T-cell (primary cell): ENCODE measurements at regions of chr1 and their contacts with region 1.

Region 1: GRCh38 chr1:61282387-61282786 is 200.0 kb downstream of the NFIA start:
- DNase-seq: no peak
- ATAC-seq: no peak
- H3K4me3 ChIP-seq: no peak overlapping the region
- H3K4me3 Mint-ChIP-seq: no peak overlapping the region
- H3K27ac ChIP-seq: no peak overlapping the region
- H3K27ac Mint-ChIP-seq: no peak overlapping the region
- H3K4me1 ChIP-seq: no peaks in the 10 kb centered on the region
- H3K4me1 Mint-ChIP-seq: peaks cover 0 to 3% (median 0%) of the 10 kb centered on the region in 3 donors
- H3K27me3 ChIP-seq: no peaks in the 10 kb centered on the region
- H3K27me3 Mint-ChIP-seq: no peaks in the 10 kb centered on the region

Region 2: DNA sequence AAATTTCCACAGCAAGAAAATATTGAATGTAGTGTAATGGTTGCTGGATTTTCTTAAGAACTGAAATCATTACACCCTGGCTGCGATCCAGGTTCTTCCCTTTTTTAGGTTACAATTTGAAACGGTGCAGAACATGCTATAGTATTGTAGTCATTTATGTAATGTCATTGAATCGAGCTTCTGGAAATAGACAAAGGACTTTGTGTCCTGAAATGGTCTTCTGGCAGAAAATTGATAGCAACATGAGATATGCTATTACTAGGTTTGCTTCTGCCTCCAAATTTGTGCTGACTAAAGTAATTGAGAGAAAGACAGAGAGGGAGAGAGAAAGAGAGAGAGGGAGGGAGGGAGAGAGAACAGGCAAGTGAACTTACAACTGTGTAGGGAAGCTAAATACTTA is 346.2 kb before region 1 on chr1:
- CTCF ChIA-PET with region 1: no interaction called
- POLR2A ChIA-PET with region 1: no interaction called
- DNase-seq: no peak
- ATAC-seq: no peak
- H3K4me3 ChIP-seq: no peak overlapping the region
- H3K4me3 Mint-ChIP-seq: no peak overlapping the region
- H3K27ac ChIP-seq: no peak overlapping the region
- H3K27ac Mint-ChIP-seq: no peak overlapping the region
- H3K4me1 ChIP-seq: no peaks in the 10 kb centered on the region
- H3K4me1 Mint-ChIP-seq: no peaks in the 10 kb centered on the region
- H3K27me3 ChIP-seq: no peaks in the 10 kb centered on the region
- H3K27me3 Mint-ChIP-seq: peaks cover 12 to 13% of the 10 kb centered on the region in 2 donors

Region 3: GRCh38 chr1:61266738-61267137 is 15.6 kb before region 1 on chr1:
- CTCF ChIA-PET with region 1: interaction called in 1 of 2 experiments, 18 read pairs
- POLR2A ChIA-PET with region 1: interaction called in 1 of 2 experiments, 5 read pairs
- DNase-seq: no peak
- ATAC-seq: no peak
- H3K4me3 ChIP-seq: no peak overlapping the region
- H3K4me3 Mint-ChIP-seq: no peak overlapping the region
- H3K27ac ChIP-seq: no peak overlapping the region
- H3K27ac Mint-ChIP-seq: no peak overlapping the region
- H3K4me1 ChIP-seq: no peaks in the 10 kb centered on the region
- H3K4me1 Mint-ChIP-seq: peaks cover 10 to 12% (median 12%) of the 10 kb centered on the region in 3 donors
- H3K27me3 ChIP-seq: no peaks in the 10 kb centered on the region
- H3K27me3 Mint-ChIP-seq: peaks cover 0 to 3% of the 10 kb centered on the region in 2 donors

Region 4: GRCh38 chr1:61318319-61319125 is 36.1 kb after region 1 on chr1:
- CTCF ChIA-PET with region 1: no interaction called
- POLR2A ChIA-PET with region 1: no interaction called
- DNase-seq: no peak
- ATAC-seq: peak in 1 of 4 experiments; percentile 40
- H3K4me3 ChIP-seq: no peak overlapping the region
- H3K4me3 Mint-ChIP-seq: no peak overlapping the region
- H3K27ac ChIP-seq: no peak overlapping the region
- H3K27ac Mint-ChIP-seq: no peak overlapping the region
- H3K4me1 ChIP-seq: no peaks in the 10 kb centered on the region
- H3K4me1 Mint-ChIP-seq: peaks cover 0 to 3% (median 3%) of the 10 kb centered on the region in 3 donors
- H3K27me3 ChIP-seq: no peaks in the 10 kb centered on the region
- H3K27me3 Mint-ChIP-seq: no peaks in the 10 kb centered on the region